HCT116 (cell line): ENCODE measurements at regions of chr11 and their contacts with region 1.

Region 1: GRCh38 chr11:70141486-70142220 is 61.4 kb upstream of the FADD start:
- DNase-seq: no peak
- ATAC-seq: no peak
- H3K4me3 ChIP-seq: no peak overlapping the region
- H3K27ac ChIP-seq: peak overlapping the region; percentile 34; the same call in 1 of the 2 replicates
- H3K4me1 ChIP-seq: peaks cover 23 to 45% of the 10 kb centered on the region in 2 experiments
- H3K27me3 ChIP-seq: no peaks in the 10 kb centered on the region
- CTCF ChIP-seq: no peak
- POLR2A ChIP-seq: no peak
- RAD21 ChIP-seq: no peak

Region 2: GRCh38 chr11:69943066-69943465 is 198.6 kb before region 1 on chr11:
- CTCF ChIA-PET with region 1: no interaction called
- POLR2A ChIA-PET with region 1: no interaction called
- RAD21 ChIA-PET with region 1: no interaction called
- intact Hi-C with region 1: loop called (anchors 1 kb)
- DNase-seq: peak; percentile 31
- ATAC-seq: peak; percentile 71
- H3K4me3 ChIP-seq: no peak overlapping the region
- H3K27ac ChIP-seq: no peak overlapping the region; the same call in 1 of the 2 replicates
- H3K4me1 ChIP-seq: peaks cover 23 to 43% of the 10 kb centered on the region in 2 experiments
- H3K27me3 ChIP-seq: no peaks in the 10 kb centered on the region
- CTCF ChIP-seq: peak in 2 of 3 experiments; percentile 49 to 53; a peak in 4 of 6 replicates
- POLR2A ChIP-seq: no peak
- RAD21 ChIP-seq: no peak

Region 3: DNA sequence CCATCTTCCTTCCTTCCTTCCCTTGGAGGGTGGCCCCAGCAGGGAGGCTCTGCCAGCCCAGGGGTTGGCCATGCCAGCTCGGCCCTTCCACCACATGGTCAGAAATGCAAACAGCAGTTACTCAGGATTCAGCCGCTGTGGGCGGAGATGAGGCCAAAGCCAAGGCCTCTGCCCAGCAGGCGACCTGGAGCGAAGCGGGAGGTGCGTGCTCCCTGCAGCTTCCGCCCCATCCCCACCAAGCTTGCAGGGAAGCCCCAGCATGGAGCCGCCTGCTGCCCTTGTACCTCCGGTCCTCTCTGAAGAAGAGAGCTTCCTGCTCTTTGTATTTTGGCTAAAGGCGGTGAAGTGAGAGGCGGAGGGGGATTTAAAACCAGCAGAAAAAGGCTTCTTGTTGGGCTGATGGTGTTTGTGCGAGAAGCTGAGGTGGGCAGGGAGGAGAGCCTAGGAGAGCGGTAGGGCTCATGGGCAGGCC is 13.2 kb before region 1 on chr11:
- CTCF ChIA-PET with region 1: no interaction called
- POLR2A ChIA-PET with region 1: no interaction called
- RAD21 ChIA-PET with region 1: no interaction called
- intact Hi-C with region 1: no loop called
- DNase-seq: peak; percentile 41
- ATAC-seq: peak; percentile 92
- H3K4me3 ChIP-seq: no peak overlapping the region
- H3K27ac ChIP-seq: peak overlapping the region; percentile 69
- H3K4me1 ChIP-seq: peaks cover 15 to 23% of the 10 kb centered on the region in 2 experiments
- H3K27me3 ChIP-seq: no peaks in the 10 kb centered on the region
- CTCF ChIP-seq: peak in 2 of 3 experiments; percentile 11 to 41; a peak in 1 of 6 replicates
- POLR2A ChIP-seq: no peak
- RAD21 ChIP-seq: peak; percentile 70